Activated naive CD4-positive, alpha-beta T cell treated with anti-CD3 and anti-CD28 coated beads for 36 hours (primary cell): ENCODE measurements at regions of chr1 and their contacts with region 1.

Region 1: DNA sequence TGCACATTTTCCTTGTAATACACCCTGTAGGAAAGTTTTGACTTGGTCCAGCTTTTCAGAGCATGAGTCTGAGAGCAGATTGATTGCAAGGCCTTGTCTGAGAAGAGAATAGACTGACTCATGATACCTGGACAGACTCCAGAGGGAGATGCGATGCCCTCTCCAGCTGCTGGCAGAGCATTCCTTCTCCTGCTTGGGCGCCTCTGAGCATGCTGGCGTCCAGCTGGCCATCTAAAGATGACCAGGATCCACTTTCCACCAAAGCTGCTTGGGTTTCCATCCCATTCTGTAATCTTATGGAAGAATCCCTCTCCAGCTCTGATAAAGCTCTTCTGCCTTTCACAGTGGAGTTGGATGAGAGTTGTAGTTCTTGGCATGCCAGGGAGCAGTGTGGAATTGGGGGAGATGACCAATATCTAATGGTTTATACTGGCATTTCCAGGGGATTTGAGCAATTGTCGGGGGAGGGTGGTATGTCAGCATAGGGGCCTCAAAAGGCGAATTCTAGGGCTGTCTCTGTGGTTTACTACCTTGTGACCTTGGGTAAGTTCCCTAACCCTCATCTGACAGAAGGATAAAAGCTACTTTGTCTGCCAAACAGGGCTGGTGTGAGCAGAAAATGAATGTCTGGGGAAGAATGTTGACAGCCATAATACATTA is 19.5 kb downstream of the SZRD1 start:
- DNase-seq: no peak
- H3K4me3 Mint-ChIP-seq: peak overlapping the region; percentile 28
- H3K27ac Mint-ChIP-seq: peak overlapping the region; percentile 62
- H3K4me1 Mint-ChIP-seq: peaks cover 74% of the 10 kb centered on the region
- H3K27me3 Mint-ChIP-seq: no peaks in the 10 kb centered on the region

Region 2: DNA sequence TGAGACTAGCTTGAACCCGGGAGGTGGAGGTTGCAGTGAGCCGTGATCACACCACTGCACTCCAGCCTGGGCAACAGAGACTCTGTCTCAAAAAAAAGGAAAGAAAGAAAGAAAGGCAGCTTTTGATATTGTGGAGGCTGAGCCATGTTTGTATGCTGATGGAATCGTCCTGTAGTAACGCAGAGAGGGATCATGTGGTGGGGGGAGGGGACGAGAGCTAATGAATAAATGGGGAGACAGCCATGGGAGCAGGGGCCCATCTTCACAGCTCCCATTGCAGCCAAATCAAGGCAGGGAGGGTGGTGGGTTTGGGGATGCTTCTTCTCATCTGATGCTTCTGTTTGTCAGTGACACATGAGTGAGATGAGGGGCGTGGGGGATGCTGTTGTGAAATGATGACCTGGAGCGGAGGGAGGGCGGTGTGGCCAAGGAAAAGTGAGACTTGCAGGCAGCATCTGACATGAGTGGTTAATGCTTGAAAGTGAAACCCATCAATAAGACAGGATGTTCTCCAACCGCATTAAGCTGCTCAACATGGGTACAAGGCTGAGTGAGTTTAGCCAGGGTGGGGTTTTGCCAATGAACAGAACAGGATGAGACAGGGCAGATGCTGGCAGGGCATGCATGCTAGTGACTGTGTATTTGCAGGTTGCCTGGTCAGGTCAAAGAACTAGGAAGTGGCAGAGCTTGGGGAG is 34.0 kb after region 1 on chr1:
- CTCF ChIA-PET with region 1: no interaction called
- intact Hi-C with region 1: loop called (anchors 5 kb)
- DNase-seq: peak; percentile 87
- H3K4me3 Mint-ChIP-seq: peak overlapping the region; percentile 10
- H3K27ac Mint-ChIP-seq: peak overlapping the region; percentile 67
- H3K4me1 Mint-ChIP-seq: peaks cover 30% of the 10 kb centered on the region
- H3K27me3 Mint-ChIP-seq: no peaks in the 10 kb centered on the region